HEK293T (cell line): ENCODE measurements at regions of chr4 and their contacts with region 1.

Region 1: GRCh38 chr4:20773144-20773997 is 73.1 kb downstream of the PACRGL start:
- DNase-seq: peak; percentile 55

Region 2: DNA sequence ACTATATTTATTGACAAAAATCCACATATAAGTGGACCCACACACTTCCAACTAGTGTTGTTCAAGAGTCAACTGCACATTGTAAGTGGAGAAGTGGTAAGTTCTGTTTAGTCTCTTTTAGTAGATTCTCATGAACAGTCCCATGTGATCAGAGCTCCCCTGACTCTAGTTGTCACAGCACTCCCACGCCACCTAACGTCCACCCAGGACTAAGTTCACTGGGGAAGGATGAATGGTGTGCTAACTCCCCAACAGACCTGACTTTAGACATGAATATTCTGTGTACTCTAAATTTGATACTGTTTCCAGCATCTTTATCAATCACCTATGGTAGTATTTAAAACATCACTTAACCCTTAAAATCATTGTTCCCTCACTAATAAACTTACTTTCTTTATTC is 13.3 kb before region 1 on chr4:
- CTCF ChIA-PET with region 1: interaction called, 10 read pairs
- POLR2A ChIA-PET with region 1: no interaction called
- DNase-seq: peak; percentile 9

Region 3: GRCh38 chr4:20787940-20788665 is 14.7 kb after region 1 on chr4:
- CTCF ChIA-PET with region 1: no interaction called
- POLR2A ChIA-PET with region 1: no interaction called
- DNase-seq: no peak